ENCODE measurements at regions of chr10 and their contacts with region 1.

Region 1: DNA sequence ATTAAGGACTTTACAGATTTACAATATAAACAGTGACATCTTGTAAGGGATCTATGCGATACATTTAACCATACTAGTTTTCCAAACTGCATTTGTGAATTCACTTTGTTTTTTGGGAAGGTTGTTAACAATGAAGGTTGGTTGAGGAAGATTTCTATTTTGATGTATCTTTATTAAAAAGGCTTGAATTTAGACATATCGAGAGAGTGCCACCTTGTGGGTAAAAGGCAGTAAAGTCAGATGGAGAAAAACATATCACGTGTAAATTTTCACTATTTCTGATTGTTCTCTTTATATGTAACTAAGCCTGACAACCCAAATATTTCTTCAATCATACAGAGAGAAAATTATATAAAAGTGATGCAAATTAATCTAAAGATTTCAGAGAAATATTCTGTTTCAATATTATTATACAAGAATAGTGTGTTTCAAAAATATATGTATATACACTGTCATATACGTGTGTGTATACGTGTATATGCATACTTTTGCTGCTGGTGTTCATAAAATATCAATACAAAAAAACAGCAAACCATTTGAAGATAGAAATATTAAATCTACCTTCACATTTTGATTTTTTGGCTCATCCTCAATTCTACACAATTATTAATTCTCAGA is 988.6 kb downstream of the SORCS1 start:
- DNase-seq: no peak
- H3K4me3 Mint-ChIP-seq: no peak overlapping the region
- H3K27ac Mint-ChIP-seq: no peak overlapping the region
- H3K4me1 Mint-ChIP-seq: no peaks in the 10 kb centered on the region
- H3K27me3 Mint-ChIP-seq: no peaks in the 10 kb centered on the region

Region 2: DNA sequence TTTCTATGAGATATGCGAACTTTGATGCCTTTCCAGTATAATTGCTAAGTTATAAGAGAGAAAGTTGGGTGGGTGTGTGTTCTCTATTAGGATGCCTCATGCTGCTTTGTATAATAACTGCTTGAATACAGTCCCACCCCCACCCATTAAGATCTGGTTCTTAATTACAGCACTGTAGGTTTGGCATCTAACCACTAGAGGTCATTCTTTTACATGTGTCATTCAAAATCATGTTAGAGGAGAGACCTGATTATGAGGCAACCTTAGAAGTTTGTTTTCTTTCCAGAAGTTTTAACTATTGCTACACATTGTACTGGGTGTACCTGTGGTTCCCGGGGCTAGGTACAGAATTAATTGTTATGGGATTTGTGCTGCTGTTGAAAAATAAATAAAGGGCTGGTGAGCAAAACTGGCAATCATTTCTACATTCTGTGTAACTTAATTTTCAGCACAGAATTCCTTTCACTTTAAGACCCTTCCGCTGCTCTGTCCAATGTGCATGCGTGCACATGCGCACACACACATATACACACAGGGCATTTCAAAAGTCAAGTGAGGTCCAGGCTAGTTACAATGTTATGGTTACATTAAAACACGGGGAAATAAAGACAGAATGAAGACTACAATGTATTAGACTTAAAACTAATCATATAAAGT is 378.5 kb before region 1 on chr10:
- intact Hi-C with region 1: loop called (anchors 10 kb)
- DNase-seq: no peak
- H3K4me3 Mint-ChIP-seq: no peak overlapping the region
- H3K27ac Mint-ChIP-seq: no peak overlapping the region
- H3K4me1 Mint-ChIP-seq: no peaks in the 10 kb centered on the region
- H3K27me3 Mint-ChIP-seq: no peaks in the 10 kb centered on the region

Region 3: GRCh38 chr10:105950410-105950809 is 225.5 kb before region 1 on chr10:
- intact Hi-C with region 1: loop called (anchors 2 kb)
- DNase-seq: no peak
- H3K4me3 Mint-ChIP-seq: no peak overlapping the region
- H3K27ac Mint-ChIP-seq: no peak overlapping the region
- H3K4me1 Mint-ChIP-seq: no peaks in the 10 kb centered on the region
- H3K27me3 Mint-ChIP-seq: peaks cover 3% of the 10 kb centered on the region

Region 4: GRCh38 chr10:106224676-106225075 is 48.8 kb after region 1 on chr10:
- intact Hi-C with region 1: no loop called
- DNase-seq: no peak
- H3K4me3 Mint-ChIP-seq: no peak overlapping the region
- H3K27ac Mint-ChIP-seq: no peak overlapping the region
- H3K4me1 Mint-ChIP-seq: no peaks in the 10 kb centered on the region
- H3K27me3 Mint-ChIP-seq: no peaks in the 10 kb centered on the region

Measured in activated T-helper 1 cell treated with anti-CD3 and anti-CD28 coated beads, Interleukin-12 subunit alpha, Interleukin-12 subunit beta, Interleukin-2, Interleukin-4 antibody, amounts not matched to agents 30 ng/mL and 10 ng/mL and 1 ng/mL, durations not matched to agents 14 hours and 24 hours and 36 hours (primary cell).